ENCODE measurements at regions of chr2 and their contacts with region 1.

Region 1: DNA sequence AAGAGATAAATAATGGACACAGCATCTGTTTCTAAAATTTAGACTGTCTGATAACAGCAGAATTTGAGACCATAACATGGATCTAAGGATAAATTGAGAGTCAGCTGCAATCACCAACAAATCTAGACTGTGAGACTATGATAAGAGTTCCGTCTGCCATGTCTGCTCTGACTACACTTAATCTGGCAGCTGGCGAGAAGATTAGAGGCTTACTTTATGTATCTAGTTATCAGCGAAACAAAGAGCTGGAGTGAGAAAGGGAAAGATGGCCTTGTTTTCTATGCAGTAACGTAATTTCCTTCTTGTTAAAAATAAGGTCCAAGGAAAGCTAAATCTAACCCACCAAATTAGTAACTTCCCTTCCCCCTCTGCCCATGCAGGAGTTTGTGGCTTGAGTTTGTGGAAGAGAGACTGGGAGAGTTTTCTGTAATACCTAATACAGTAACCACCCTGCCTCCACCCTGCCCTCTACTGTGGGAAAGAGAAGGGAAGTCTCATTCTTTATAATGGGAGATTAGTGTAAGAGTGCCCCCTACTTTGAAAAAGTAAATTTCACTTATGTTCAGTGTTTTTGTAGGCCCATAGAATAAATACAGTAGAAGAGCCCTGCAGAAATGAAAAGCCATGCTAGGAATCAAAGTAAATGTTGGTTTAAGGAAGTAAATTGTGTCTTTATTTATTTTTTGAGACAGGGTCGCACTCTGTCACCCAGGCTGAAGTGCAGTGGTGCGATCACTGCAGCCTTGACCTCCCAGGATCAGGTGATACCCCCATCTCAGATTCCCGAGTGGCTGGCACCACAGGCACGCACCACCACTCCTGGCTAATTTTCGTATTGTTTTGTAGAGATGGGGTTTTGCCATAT is 27.5 kb downstream of the EML4 start:
- DNase-seq: peak; percentile 53
- ATAC-seq: peak; percentile 51
- H3K4me3 Mint-ChIP-seq: no peak overlapping the region
- H3K27ac Mint-ChIP-seq: peak overlapping the region; percentile 5
- H3K4me1 Mint-ChIP-seq: peaks cover 80% of the 10 kb centered on the region
- H3K27me3 Mint-ChIP-seq: no peaks in the 10 kb centered on the region

Region 2: GRCh38 chr2:41853427-41854216 is 343.0 kb before region 1 on chr2:
- CTCF ChIA-PET with region 1: interaction called, 3 read pairs
- POLR2A ChIA-PET with region 1: no interaction called
- intact Hi-C with region 1: loop called in 1 of 2 experiments (anchors 10 kb)
- DNase-seq: peak; percentile 28
- ATAC-seq: peak; percentile 50
- H3K4me3 Mint-ChIP-seq: no peak overlapping the region
- H3K27ac Mint-ChIP-seq: peak overlapping the region; percentile 47
- H3K4me1 Mint-ChIP-seq: peaks cover 17% of the 10 kb centered on the region
- H3K27me3 Mint-ChIP-seq: peaks cover 10% of the 10 kb centered on the region

Region 3: DNA sequence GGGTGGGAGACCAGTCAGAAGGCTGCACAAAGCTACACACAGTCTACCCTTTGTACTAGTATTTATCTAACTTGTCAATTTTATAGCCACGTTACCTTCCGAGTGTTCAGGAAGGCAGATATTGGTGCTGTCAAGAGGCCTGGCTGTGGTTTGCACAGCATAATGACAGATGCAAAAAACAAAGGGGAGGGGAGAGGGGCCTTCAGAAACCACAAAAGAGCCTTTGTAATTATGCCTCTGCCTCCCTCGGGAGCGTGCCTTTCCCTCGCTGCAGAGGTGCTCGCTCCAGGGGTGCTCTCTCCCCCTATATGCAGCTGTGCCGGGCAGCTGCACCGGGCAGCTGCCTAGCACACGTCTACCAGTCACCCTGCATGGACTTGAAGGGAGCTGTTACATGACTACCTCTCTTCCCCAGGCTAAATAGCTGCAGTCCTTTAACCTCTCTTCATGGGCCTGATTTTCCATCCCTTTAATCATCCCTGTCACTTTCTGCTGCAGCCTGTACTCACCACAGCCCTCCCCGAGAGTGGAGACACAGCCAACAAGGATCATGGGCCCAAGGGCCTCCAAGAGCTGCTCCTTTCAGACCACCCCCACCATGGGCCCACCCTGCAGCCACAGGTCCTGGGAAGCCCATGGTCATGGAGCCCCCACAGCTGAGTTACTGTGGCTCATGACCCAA is 317.3 kb before region 1 on chr2:
- CTCF ChIA-PET with region 1: no interaction called
- POLR2A ChIA-PET with region 1: no interaction called
- intact Hi-C with region 1: no loop called
- DNase-seq: no peak
- ATAC-seq: no peak
- H3K4me3 Mint-ChIP-seq: no peak overlapping the region
- H3K27ac Mint-ChIP-seq: no peak overlapping the region
- H3K4me1 Mint-ChIP-seq: no peaks in the 10 kb centered on the region
- H3K27me3 Mint-ChIP-seq: no peaks in the 10 kb centered on the region

Region 4: GRCh38 chr2:42238644-42239288 is 42.1 kb after region 1 on chr2:
- CTCF ChIA-PET with region 1: interaction called, 4 read pairs
- POLR2A ChIA-PET with region 1: no interaction called
- intact Hi-C with region 1: loop called in 1 of 2 experiments (anchors 5 kb)
- DNase-seq: peak; percentile 66
- ATAC-seq: peak; percentile 91
- H3K4me3 Mint-ChIP-seq: no peak overlapping the region
- H3K27ac Mint-ChIP-seq: no peak overlapping the region
- H3K4me1 Mint-ChIP-seq: peaks cover 79% of the 10 kb centered on the region
- H3K27me3 Mint-ChIP-seq: no peaks in the 10 kb centered on the region

Region 5: DNA sequence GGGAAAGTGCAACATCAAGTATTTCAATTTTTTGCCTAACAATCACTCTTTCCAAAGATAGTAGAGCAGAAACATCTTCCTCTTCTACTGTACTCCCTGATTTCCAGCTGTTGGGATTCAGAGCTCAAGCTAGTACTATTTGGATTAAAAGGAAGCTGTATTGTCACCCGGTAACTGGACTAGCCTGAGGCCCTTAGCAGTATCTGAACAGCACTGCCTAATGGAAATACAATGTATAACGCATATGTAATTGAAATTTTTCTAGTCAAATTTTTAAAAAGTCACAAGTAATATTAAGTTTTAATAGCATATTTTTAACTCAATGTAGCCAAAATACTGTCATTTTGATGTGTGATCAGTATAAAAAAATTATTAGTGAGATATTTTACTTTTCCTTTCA is 78.2 kb after region 1 on chr2:
- CTCF ChIA-PET with region 1: no interaction called
- POLR2A ChIA-PET with region 1: no interaction called
- intact Hi-C with region 1: no loop called
- DNase-seq: no peak
- ATAC-seq: no peak
- H3K4me3 Mint-ChIP-seq: no peak overlapping the region
- H3K27ac Mint-ChIP-seq: no peak overlapping the region
- H3K4me1 Mint-ChIP-seq: peaks cover 4% of the 10 kb centered on the region
- H3K27me3 Mint-ChIP-seq: no peaks in the 10 kb centered on the region